HepG2 (cell line): ENCODE measurements at regions of chr16 and their contacts with region 1.

Region 1: DNA sequence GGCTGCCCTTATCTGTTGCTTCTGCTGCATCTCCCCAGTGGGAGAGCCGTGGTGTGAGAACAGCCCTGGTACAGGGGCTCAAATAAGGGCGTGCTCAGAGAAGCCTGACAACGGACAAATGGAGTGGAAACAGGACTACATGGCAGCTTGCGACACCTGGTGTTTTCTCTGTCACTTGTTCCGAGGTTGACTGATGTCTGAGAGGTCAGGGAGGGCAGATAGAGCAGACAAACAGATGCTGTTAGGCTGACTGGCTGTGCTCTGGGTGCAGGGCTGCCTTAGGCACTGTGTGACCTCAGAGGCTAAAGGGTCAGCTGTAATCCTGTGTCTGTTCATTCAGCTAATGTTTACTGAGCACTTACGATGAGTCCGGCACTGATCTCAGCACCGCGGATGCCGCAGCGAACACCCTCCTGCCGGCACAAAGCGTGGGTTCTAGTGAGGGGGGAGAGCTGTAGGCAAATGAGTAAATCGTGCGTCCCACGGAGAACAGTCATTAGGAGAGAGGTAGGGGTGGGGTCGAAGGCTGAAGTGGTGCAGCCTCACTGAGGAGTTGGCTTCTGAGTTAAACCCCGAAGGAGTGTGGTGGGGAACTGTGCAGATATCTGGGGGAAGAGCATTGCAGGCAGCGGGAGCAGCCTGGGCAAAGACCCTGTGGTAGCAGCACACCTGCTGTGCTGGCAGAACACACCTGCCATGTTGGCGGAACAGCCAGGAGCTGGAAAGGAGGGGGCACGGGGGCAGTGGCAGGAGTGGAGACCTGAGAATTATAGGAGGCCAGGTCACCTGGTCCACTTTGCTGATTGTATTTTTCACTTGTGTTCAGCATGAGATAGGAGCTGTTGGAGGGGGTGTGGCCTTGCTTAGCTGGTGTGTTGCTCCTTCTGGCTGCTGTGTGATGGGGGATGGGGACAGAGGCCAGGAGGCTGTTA is 35.0 kb downstream of the GPT2 start:
- DNase-seq: peak; percentile 97
- ATAC-seq: peak; percentile 88
- H3K4me3 ChIP-seq: no peak overlapping the region
- H3K27ac ChIP-seq: peak overlapping the region; percentile 43
- H3K4me1 ChIP-seq: peaks cover 56% of the 10 kb centered on the region
- H3K27me3 ChIP-seq: no peaks in the 10 kb centered on the region
- CTCF ChIP-seq: peak; percentile 96
- EP300 ChIP-seq: peak; percentile 64 to 67; a peak in 2 of 4 replicates
- POLR2A ChIP-seq: peak in 1 of 2 experiments; percentile 16; a peak in 2 of 4 replicates
- RAD21 ChIP-seq: peak; percentile 72; the same call in 1 of the 2 replicates

Region 2: DNA sequence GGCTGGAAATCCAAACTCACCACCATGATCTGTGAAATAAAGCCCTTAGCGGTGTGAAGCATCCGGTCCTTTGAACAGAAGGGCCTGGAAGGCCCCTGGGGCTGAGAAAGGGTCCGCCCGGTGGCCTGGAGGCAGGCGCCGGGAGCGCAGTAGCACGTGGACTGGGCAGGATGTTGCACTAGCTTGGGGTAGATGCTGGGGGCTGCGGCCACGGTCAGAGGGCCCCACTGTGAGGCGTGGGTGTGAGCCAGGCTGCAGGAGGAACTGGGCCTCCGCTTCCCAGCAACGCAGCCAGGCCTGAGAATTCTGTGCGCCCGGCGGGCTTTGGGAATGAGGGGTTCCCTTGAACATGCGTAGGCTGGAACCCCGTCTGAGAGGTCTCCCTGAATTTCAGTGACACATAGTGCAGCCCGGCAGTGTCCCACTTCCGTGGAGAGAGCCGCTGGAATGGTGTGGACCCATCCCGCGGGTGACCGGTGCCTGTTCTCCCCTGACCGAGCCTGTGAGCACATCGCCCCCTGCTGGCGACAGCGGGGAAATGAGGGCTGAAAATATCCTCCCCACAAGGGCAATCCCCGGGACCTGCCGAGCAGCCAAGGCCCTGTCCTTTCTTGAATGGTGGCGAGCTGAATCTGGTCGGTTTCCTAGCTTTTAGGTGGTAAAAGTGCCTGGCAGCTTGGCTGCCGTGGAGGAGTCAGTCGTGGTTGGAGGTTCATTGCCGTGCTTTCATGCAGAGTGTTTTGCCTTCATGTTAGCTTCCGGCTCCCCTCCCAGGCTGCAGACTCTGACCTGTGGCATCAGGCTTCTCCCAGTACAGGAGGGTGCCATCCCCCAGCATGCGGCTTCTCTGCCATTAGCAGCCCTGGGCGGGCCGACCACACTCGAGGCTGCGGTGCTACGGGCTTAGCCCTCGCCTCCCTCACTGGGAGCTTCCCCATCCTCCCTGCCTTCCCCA is 10.5 kb after region 1 on chr16:
- CTCF ChIA-PET with region 1: no interaction called
- POLR2A ChIA-PET with region 1: interaction called, 5 read pairs
- in situ Hi-C with region 1: no loop called
- intact Hi-C with region 1: loop called (anchors 1 kb)
- DNase-seq: peak; percentile 60
- ATAC-seq: peak; percentile 65
- H3K4me3 ChIP-seq: no peak overlapping the region
- H3K27ac ChIP-seq: no peak overlapping the region
- H3K4me1 ChIP-seq: peaks cover 10% of the 10 kb centered on the region
- H3K27me3 ChIP-seq: no peaks in the 10 kb centered on the region
- CTCF ChIP-seq: peak; percentile 94
- EP300 ChIP-seq: no peak
- POLR2A ChIP-seq: peak in 1 of 2 experiments; percentile 47; a peak in 1 of 4 replicates
- RAD21 ChIP-seq: peak; percentile 80